Aorta (tissue), 5 donors: ENCODE measurements at regions of chr15 and their contacts with region 1.

Region 1: DNA sequence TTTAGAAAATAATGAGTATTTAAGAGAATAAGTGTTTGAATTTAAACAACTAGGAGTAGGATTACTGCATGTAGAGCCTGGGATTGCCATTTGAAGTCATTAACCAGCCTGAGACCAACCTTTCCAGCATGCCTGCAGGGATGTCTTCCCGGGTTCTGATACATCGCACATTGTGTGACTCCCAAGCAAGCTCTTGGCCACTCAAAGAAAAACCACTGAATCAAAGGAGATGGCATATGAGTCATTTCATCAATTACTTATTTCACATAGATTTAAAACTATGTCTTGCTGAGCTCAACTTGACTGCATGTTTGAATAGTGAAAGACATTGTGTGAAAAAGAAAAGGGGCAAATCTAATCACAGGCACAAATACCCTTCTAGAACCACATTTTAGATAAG is 15.0 kb upstream of the THBS1 start:
- DNase-seq: no peak
- ATAC-seq: no peak
- H3K4me3 ChIP-seq: no peak overlapping the region
- H3K27ac ChIP-seq: no peak overlapping the region
- H3K4me1 ChIP-seq: no peaks in the 10 kb centered on the region
- H3K27me3 ChIP-seq: no peaks in the 10 kb centered on the region

Region 2: GRCh38 chr15:39273717-39274411 is 292.0 kb before region 1 on chr15:
- intact Hi-C with region 1: loop called in 1 of 2 experiments (anchors 10 kb)
- DNase-seq: no peak
- ATAC-seq: no peak
- H3K4me3 ChIP-seq: no peak overlapping the region
- H3K27ac ChIP-seq: no peak overlapping the region
- H3K4me1 ChIP-seq: no peaks in the 10 kb centered on the region
- H3K27me3 ChIP-seq: no peaks in the 10 kb centered on the region

Region 3: DNA sequence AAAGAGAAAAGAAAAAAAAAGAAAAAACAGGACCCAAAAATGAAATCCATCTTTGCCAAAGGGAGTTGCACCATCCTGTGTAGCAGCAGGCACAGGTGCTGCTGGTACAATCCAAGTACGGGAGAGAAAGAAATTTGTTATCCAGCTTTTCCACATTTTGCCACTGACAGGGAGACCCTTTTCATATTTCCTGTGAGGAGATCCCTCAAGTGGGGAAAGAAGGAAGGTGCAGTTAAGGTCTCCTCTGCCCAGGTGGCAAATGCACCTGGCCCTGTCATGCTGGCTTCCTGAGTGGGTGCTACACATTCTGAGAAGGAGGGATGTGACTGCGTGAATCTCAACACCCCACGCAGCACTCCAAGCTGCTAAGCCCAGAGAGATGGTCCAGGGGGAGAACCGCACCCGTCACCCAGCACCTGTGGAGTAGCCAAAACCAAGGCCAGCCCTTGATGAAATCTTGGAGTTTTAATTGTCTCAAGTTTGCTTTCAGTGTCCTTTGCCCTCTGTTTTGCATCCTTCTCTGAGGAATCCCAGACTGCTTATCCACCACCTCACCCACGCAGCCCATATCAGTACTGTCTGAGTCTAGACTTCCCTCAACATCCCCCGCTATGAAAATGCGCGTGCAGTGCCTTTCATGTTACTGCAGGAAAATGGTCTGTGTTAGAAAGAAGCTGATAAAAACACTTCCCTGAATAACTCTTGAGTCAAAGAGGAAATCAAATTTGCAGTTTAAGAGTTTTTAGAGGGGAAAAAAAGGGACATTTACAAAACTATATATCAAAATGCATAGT is 126.9 kb before region 1 on chr15:
- intact Hi-C with region 1: no loop called
- DNase-seq: no peak
- ATAC-seq: no peak
- H3K4me3 ChIP-seq: no peak overlapping the region
- H3K27ac ChIP-seq: no peak overlapping the region
- H3K4me1 ChIP-seq: no peaks in the 10 kb centered on the region
- H3K27me3 ChIP-seq: no peaks in the 10 kb centered on the region